CD4-positive, alpha-beta memory T cell (primary cell): ENCODE measurements at regions of chr11 and their contacts with region 1.

Region 1: GRCh38 chr11:33161120-33162005 is at the start of gene CSTF3:
- DNase-seq: peak; percentile 89 to 96 (median 90)
- H3K4me3 ChIP-seq: peak within 1 kb of the TSS; percentile 94 to 95
- H3K4me3 Mint-ChIP-seq: peak within 1 kb of the TSS; percentile 94 to 100 (median 100)
- H3K27ac ChIP-seq: peak within 1 kb of the TSS; percentile 87
- H3K27ac Mint-ChIP-seq: peak within 1 kb of the TSS; percentile 95 to 100 (median 98)
- H3K4me1 ChIP-seq: peaks cover 48% of the 10 kb centered on the region
- H3K4me1 Mint-ChIP-seq: peaks cover 32 to 64% (median 47%) of the 10 kb centered on the region in 4 donors
- H3K27me3 ChIP-seq: no peaks in the 10 kb centered on the region
- H3K27me3 Mint-ChIP-seq: no peaks in the 10 kb centered on the region
- total RNA-seq, gene CSTF3: 33.5 to 34.0 TPM

Region 2: GRCh38 chr11:32847511-32847910 is 313.9 kb before region 1 on chr11:
- CTCF ChIA-PET with region 1: no interaction called
- POLR2A ChIA-PET with region 1: no interaction called
- intact Hi-C with region 1: no loop called
- DNase-seq: no peak
- H3K4me3 ChIP-seq: no peak overlapping the region
- H3K4me3 Mint-ChIP-seq: no peak overlapping the region
- H3K27ac ChIP-seq: no peak overlapping the region
- H3K27ac Mint-ChIP-seq: no peak overlapping the region
- H3K4me1 ChIP-seq: no peaks in the 10 kb centered on the region
- H3K4me1 Mint-ChIP-seq: no peaks in the 10 kb centered on the region
- H3K27me3 ChIP-seq: no peaks in the 10 kb centered on the region
- H3K27me3 Mint-ChIP-seq: peaks cover 3 to 8% of the 10 kb centered on the region in 2 donors

Region 3: GRCh38 chr11:33039274-33040032 is 121.9 kb before region 1 on chr11 and contains the start of gene TCP11L1:
- CTCF ChIA-PET with region 1: no interaction called
- POLR2A ChIA-PET with region 1: interaction called, 10 read pairs
- intact Hi-C with region 1: loop called (anchors 1 kb)
- DNase-seq: peak; percentile 74 to 90 (median 80)
- H3K4me3 ChIP-seq: peak within 1 kb of the TSS; percentile 62 to 73
- H3K4me3 Mint-ChIP-seq: peak within 1 kb of the TSS; percentile 93 to 95 (median 95)
- H3K27ac ChIP-seq: peak within 1 kb of the TSS; percentile 78
- H3K27ac Mint-ChIP-seq: peak within 1 kb of the TSS; percentile 92 to 98 (median 95)
- H3K4me1 ChIP-seq: peaks cover 11% of the 10 kb centered on the region
- H3K4me1 Mint-ChIP-seq: peaks cover 8 to 19% (median 11%) of the 10 kb centered on the region in 4 donors
- H3K27me3 ChIP-seq: no peaks in the 10 kb centered on the region
- H3K27me3 Mint-ChIP-seq: peaks cover 2 to 7% of the 10 kb centered on the region in 2 donors
- total RNA-seq, gene TCP11L1: 20.2 to 20.9 TPM

Region 4: GRCh38 chr11:33207408-33207985 is 46.1 kb after region 1 on chr11:
- CTCF ChIA-PET with region 1: no interaction called
- POLR2A ChIA-PET with region 1: no interaction called
- intact Hi-C with region 1: no loop called
- DNase-seq: no peak
- H3K4me3 ChIP-seq: no peak overlapping the region
- H3K4me3 Mint-ChIP-seq: no peak overlapping the region
- H3K27ac ChIP-seq: no peak overlapping the region
- H3K27ac Mint-ChIP-seq: no peak overlapping the region
- H3K4me1 ChIP-seq: no peaks in the 10 kb centered on the region
- H3K4me1 Mint-ChIP-seq: no peaks in the 10 kb centered on the region
- H3K27me3 ChIP-seq: no peaks in the 10 kb centered on the region
- H3K27me3 Mint-ChIP-seq: peaks cover 5 to 7% of the 10 kb centered on the region in 2 donors

Region 5: GRCh38 chr11:33329705-33330329 is 168.5 kb after region 1 on chr11:
- CTCF ChIA-PET with region 1: interaction called, 49 read pairs
- POLR2A ChIA-PET with region 1: no interaction called
- intact Hi-C with region 1: loop called (anchors 1 kb)
- DNase-seq: peak; percentile 47 to 56 (median 49)
- H3K4me3 ChIP-seq: no peak overlapping the region
- H3K4me3 Mint-ChIP-seq: no peak overlapping the region
- H3K27ac ChIP-seq: no peak overlapping the region
- H3K27ac Mint-ChIP-seq: peak overlapping the region in 4 of 7 donors; percentile 31 to 73 (median 54)
- H3K4me1 ChIP-seq: peaks cover under 1% of the 10 kb centered on the region
- H3K4me1 Mint-ChIP-seq: peaks cover 17 to 33% (median 24%) of the 10 kb centered on the region in 4 donors
- H3K27me3 ChIP-seq: no peaks in the 10 kb centered on the region
- H3K27me3 Mint-ChIP-seq: no peaks in the 10 kb centered on the region

Region 6: DNA sequence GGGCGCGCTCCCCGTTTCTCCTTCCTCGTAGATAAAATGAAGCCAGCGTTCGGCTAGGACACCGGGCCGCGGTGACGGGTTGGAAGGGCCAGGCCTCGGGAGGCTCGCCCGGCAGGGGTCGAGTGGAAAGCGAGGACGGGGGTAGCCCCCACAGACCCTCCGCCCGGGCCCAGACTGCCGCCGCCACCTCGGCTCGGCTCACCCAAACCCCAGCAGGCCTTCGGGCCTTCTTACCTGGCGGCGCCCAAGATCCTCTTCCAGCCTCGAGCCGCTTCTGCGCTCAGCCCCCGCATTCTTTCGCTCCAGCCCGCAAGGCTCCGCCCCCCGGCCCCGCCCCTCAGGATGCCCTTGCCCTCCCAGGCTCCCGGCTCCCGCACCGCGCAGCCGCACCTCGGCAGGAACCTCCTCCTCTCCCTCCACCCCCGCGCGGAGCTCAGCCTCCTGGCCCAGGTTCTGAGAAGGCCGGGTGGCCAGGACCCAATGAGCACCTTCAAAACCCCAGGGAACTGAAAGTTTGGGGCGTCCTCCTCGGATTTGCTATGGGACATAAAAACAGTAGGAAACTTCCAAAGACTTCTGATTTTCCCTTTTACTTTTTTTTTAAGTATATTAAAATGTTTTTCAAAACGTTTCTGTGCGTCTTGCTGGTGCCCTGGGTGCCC is 574.9 kb after region 1 on chr11 and contains the start of gene CD59:
- CTCF ChIA-PET with region 1: no interaction called
- POLR2A ChIA-PET with region 1: interaction called, 4 read pairs
- intact Hi-C with region 1: loop called (anchors 2 kb)
- DNase-seq: peak; percentile 82 to 89 (median 83)
- H3K4me3 ChIP-seq: peak within 1 kb of the TSS; percentile 76 to 91
- H3K4me3 Mint-ChIP-seq: peak within 1 kb of the TSS; percentile 88 to 96 (median 92)
- H3K27ac ChIP-seq: peak within 1 kb of the TSS; percentile 75
- H3K27ac Mint-ChIP-seq: peak within 1 kb of the TSS; percentile 78 to 94 (median 90)
- H3K4me1 ChIP-seq: peaks cover 30% of the 10 kb centered on the region
- H3K4me1 Mint-ChIP-seq: peaks cover 25 to 44% (median 37%) of the 10 kb centered on the region in 4 donors
- H3K27me3 ChIP-seq: no peaks in the 10 kb centered on the region
- H3K27me3 Mint-ChIP-seq: no peaks in the 10 kb centered on the region
- total RNA-seq, gene CD59: 95.8 to 100 TPM